CD8-positive, alpha-beta memory T cell (primary cell): ENCODE measurements at regions of chr6 and their contacts with region 1.

Region 1: GRCh38 chr6:79949233-79949632 is 1.9 kb upstream of the ELOVL4 start:
- DNase-seq: peak; percentile 47 to 75 (median 62)
- H3K4me3 ChIP-seq: no peak overlapping the region
- H3K4me3 Mint-ChIP-seq: peak overlapping the region in 5 of 7 donors; percentile 23 to 76 (median 64)
- H3K27ac ChIP-seq: no peak overlapping the region
- H3K27ac Mint-ChIP-seq: peak overlapping the region in 7 of 8 donors; percentile 12 to 90 (median 52)
- H3K4me1 ChIP-seq: peaks cover 10% of the 10 kb centered on the region
- H3K4me1 Mint-ChIP-seq: peaks cover 28 to 34% (median 30%) of the 10 kb centered on the region in 3 donors
- H3K27me3 ChIP-seq: no peaks in the 10 kb centered on the region
- H3K27me3 Mint-ChIP-seq: peaks cover 8 to 9% of the 10 kb centered on the region in 2 donors

Region 2: DNA sequence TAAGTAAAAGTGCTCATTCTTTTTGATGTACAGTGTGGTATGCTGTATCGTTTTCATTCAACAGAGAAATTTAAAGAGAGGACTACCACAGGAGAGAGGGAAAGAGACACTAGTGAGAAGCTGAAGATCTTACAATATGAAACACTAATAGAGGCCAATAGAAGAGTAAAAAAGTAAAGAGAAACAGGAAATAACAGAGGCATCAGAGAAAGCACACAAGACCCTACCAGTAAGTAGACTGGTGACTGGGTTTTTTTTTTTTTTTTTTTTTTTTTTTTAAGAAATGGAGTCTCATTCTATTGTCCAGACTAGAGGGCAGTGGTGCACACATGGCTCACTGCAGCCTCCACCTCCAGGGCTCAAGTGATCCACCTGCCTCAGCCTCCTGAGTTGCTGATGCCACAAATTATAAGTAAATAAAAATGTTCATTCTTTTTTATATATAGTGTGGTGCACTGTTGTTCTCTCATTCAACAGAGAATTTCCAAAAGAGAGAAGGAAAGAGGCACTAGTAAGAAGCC is 20.7 kb before region 1 on chr6:
- CTCF ChIA-PET with region 1: no interaction called
- POLR2A ChIA-PET with region 1: no interaction called
- DNase-seq: no peak
- H3K4me3 ChIP-seq: no peak overlapping the region
- H3K4me3 Mint-ChIP-seq: peak overlapping the region in 2 of 7 donors; percentile 3 to 15
- H3K27ac ChIP-seq: no peak overlapping the region
- H3K27ac Mint-ChIP-seq: peak overlapping the region in 4 of 8 donors; percentile 1 to 29 (median 18)
- H3K4me1 ChIP-seq: peaks cover 6% of the 10 kb centered on the region
- H3K4me1 Mint-ChIP-seq: peaks cover 9 to 14% (median 13%) of the 10 kb centered on the region in 3 donors
- H3K27me3 ChIP-seq: no peaks in the 10 kb centered on the region
- H3K27me3 Mint-ChIP-seq: peaks cover 1% of the 10 kb centered on the region in 2 donors

Region 3: DNA sequence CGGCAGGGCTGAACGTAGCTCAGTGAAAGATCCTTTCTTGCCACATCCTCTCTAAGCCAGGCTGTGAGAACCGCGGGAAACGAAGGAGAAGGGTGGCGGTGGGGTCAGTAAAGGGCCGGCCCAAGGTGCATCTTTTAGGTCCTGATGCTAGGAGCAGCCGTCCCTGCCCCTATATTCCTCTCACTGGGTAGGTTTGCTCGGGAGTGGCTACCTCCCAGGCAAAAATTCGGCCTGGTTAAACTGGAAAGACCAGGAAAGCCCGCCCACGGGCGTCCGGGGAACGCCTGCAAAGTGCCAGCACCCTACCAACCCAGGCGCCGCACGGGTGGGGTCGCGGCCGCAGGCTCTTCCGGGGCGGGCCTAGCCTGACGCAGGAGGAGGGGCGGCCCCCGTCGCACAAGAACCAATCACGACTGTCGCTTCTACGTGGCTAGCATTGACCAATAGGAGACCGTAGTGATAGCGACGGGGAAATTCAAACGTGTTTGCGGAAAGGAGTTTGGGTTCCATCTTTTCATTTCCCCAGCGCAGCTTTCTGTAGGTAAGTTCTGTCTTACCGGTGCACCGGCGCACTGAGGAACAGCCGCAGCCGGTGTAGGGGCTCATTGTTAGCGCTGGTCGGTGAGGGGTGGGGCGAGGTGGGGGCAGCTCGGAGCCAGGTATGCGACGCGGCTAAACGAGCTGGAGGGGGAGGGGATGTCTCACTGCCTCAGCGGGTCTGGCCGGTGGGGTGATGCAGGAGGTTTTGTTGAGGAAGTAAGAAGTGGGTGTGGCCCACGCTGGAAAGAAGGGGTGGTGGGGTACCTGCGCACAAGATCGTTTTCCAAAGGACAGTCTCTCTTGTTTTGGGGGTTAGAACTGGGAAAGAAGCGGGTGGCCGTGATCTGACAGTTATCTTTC is 55.2 kb after region 1 on chr6 and contains the start of gene TTK:
- CTCF ChIA-PET with region 1: interaction called, 17 read pairs
- POLR2A ChIA-PET with region 1: interaction called, 5 read pairs
- DNase-seq: peak; percentile 89 to 95 (median 93)
- H3K4me3 ChIP-seq: peak within 1 kb of the TSS; percentile 59
- H3K4me3 Mint-ChIP-seq: peak within 1 kb of the TSS; percentile 79 to 93 (median 91)
- H3K27ac ChIP-seq: peak within 1 kb of the TSS; percentile 85
- H3K27ac Mint-ChIP-seq: peak within 1 kb of the TSS; percentile 88 to 100 (median 98)
- H3K4me1 ChIP-seq: peaks cover 16% of the 10 kb centered on the region
- H3K4me1 Mint-ChIP-seq: peaks cover 18 to 27% (median 24%) of the 10 kb centered on the region in 3 donors
- H3K27me3 ChIP-seq: no peaks in the 10 kb centered on the region
- H3K27me3 Mint-ChIP-seq: peaks cover 0 to 3% of the 10 kb centered on the region in 2 donors
- total RNA-seq, gene TTK: 19.4 to 22.5 TPM

Region 4: GRCh38 chr6:80088637-80089036 is 139.4 kb after region 1 on chr6:
- CTCF ChIA-PET with region 1: interaction called, 32 read pairs
- POLR2A ChIA-PET with region 1: no interaction called
- DNase-seq: no peak
- H3K4me3 ChIP-seq: no peak overlapping the region
- H3K4me3 Mint-ChIP-seq: no peak overlapping the region
- H3K27ac ChIP-seq: no peak overlapping the region
- H3K27ac Mint-ChIP-seq: no peak overlapping the region
- H3K4me1 ChIP-seq: no peaks in the 10 kb centered on the region
- H3K4me1 Mint-ChIP-seq: no peaks in the 10 kb centered on the region
- H3K27me3 ChIP-seq: no peaks in the 10 kb centered on the region
- H3K27me3 Mint-ChIP-seq: peaks cover 2 to 11% of the 10 kb centered on the region in 2 donors

Region 5: GRCh38 chr6:80094017-80094416 is 144.8 kb after region 1 on chr6:
- CTCF ChIA-PET with region 1: interaction called, 32 read pairs
- POLR2A ChIA-PET with region 1: no interaction called
- DNase-seq: peak in 2 of 5 donors; percentile 20 to 21
- H3K4me3 ChIP-seq: no peak overlapping the region
- H3K4me3 Mint-ChIP-seq: no peak overlapping the region
- H3K27ac ChIP-seq: no peak overlapping the region
- H3K27ac Mint-ChIP-seq: no peak overlapping the region
- H3K4me1 ChIP-seq: no peaks in the 10 kb centered on the region
- H3K4me1 Mint-ChIP-seq: peaks cover 0 to 6% (median 2%) of the 10 kb centered on the region in 3 donors
- H3K27me3 ChIP-seq: no peaks in the 10 kb centered on the region
- H3K27me3 Mint-ChIP-seq: peaks cover 1 to 4% of the 10 kb centered on the region in 2 donors